Pancreas (tissue), 10 donors: ENCODE measurements at regions of chr4 and their contacts with region 1.

Region 1: DNA sequence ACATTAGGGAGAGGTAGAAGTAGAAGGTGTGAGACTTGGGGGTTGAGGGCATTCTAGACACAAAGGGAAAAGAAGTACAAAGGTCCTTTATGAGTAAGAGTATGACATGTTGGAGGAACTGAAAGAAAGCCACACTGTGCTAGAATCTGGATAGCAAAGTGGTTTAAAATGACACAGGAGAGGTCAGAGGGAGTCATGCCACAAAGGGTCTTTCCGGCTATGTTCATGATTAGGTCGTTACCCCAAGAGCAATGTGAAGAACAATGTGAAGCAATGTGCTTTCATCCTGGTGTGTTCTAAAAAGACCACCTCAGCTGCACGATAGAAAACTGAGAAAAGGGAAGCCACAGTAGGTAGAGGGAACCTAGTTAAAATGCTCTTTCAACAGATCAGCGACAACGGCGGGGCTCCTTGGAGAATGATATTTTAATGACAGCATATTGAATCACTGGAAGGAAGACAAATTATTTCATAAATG is 29.2 kb downstream of the SMIM14 start:
- DNase-seq: no peak
- ATAC-seq: peak in 2 of 4 donors; percentile 37 to 43
- H3K4me3 ChIP-seq: no peak overlapping the region
- H3K27ac ChIP-seq: no peak overlapping the region
- H3K4me1 ChIP-seq: peaks cover 0 to 10% (median 0%) of the 10 kb centered on the region in 3 donors
- H3K27me3 ChIP-seq: no peaks in the 10 kb centered on the region
- CTCF ChIP-seq: no peak

Region 2: GRCh38 chr4:39446751-39447573 is 162.5 kb before region 1 on chr4:
- intact Hi-C with region 1: no loop called
- DNase-seq: peak; percentile 20 to 80 (median 50)
- ATAC-seq: peak; percentile 57 to 87 (median 72)
- H3K4me3 ChIP-seq: peak overlapping the region in 2 of 4 donors; percentile 16 to 38
- H3K27ac ChIP-seq: peak overlapping the region in 1 of 4 donors; percentile 55
- H3K4me1 ChIP-seq: peaks cover 0 to 5% (median 0%) of the 10 kb centered on the region in 3 donors
- H3K27me3 ChIP-seq: no peaks in the 10 kb centered on the region
- CTCF ChIP-seq: no peak

Region 3: DNA sequence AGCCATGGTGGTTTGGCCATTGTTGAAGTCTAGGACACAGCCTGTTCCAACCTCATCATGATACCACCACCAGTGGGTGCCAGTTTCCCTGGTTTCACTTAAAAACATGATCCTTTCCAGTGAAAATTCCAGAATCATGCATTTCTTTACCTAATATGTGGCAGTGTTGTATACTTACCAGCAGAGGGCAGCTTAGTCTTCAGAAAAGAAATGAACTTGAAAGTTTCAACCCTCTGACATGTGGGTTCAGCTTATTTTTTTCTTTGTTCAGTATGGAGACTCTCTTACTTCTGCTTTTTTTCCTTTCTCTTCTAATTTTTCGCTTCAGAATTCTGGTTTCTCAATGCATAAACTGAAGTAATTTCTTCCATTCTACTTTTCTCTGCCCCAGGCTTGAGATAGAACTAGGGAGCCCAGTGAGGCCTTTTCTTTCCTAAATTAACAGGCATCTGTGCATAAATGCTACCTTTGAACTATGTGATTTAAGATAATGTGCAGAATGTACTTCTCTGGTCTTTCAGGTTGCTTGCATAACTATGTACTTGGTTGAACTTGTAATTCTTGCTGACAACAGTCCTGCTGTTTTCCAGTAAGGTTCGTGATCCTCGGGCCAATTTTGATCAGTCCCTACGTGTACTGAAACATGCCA is 139.9 kb before region 1 on chr4:
- intact Hi-C with region 1: loop called in 1 of 3 experiments (anchors 10 kb)
- DNase-seq: peak in 3 of 6 donors; percentile 16 to 49 (median 29)
- ATAC-seq: peak; percentile 72 to 96 (median 92)
- H3K4me3 ChIP-seq: no peak overlapping the region
- H3K27ac ChIP-seq: peak overlapping the region in 2 of 4 donors; percentile 30 to 68
- H3K4me1 ChIP-seq: no peaks in the 10 kb centered on the region
- H3K27me3 ChIP-seq: no peaks in the 10 kb centered on the region
- CTCF ChIP-seq: peak; percentile 54 to 72 (median 64)